Activated naive CD8-positive, alpha-beta T cell treated with anti-CD3 and anti-CD28 coated beads, Interleukin-2, amount 10 ng/mL, durations not matched to agents 7 days and 5 days (primary cell): ENCODE measurements at regions of chr6 and their contacts with region 1.

Region 1: DNA sequence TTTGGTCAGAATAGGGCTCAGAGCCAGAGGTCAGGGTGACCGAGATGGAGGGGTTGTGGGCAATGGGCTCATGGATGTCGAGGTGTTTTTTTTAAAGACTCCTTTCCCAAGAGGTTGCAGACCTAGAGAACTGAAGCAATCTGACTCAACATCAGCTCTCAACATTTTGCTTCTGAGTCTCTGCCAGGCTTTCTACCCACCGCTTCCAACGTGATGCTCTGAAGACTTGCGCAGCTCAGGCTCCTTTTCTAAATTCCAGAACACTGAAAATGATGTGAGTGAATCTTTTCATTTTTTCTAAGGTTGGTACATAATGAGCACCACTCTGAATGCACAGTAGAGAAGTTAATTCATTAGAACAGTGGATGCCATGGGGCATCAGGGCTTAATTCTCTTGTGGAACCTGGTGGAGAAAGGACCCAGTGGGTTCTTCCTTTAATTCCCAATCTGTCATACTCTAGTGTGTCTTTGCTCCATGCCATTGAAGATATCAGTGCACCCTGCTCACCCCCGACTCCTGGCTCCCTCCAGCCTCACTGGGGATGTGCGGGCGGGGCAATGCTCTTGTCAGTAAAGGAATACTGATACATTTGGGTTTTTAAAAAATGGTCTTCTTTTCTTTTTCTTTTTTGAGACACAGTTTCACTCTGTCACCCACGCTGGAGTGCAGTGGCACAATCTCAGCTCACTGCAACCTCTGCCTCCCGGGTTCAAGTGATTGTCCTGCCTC is 17.0 kb upstream of the KIF13A start:
- DNase-seq: no peak
- ATAC-seq: no peak
- H3K4me3 Mint-ChIP-seq: no peak overlapping the region
- H3K27ac Mint-ChIP-seq: no peak overlapping the region
- H3K4me1 Mint-ChIP-seq: no peaks in the 10 kb centered on the region
- H3K27me3 Mint-ChIP-seq: peaks cover 7% of the 10 kb centered on the region

Region 2: GRCh38 chr6:18155150-18155863 is 150.9 kb after region 1 on chr6 and contains the start of gene KDM1B:
- POLR2A ChIA-PET with region 1: interaction called, 10 read pairs
- DNase-seq: peak; percentile 98
- ATAC-seq: peak; percentile 95
- H3K4me3 Mint-ChIP-seq: peak within 1 kb of the TSS; percentile 98
- H3K27ac Mint-ChIP-seq: peak within 1 kb of the TSS; percentile 96
- H3K4me1 Mint-ChIP-seq: peaks cover 16% of the 10 kb centered on the region
- H3K27me3 Mint-ChIP-seq: no peaks in the 10 kb centered on the region
- total RNA-seq, gene KDM1B: 9.7 to 10.2 TPM